Activated naive CD8-positive, alpha-beta T cell treated with anti-CD3 and anti-CD28 coated beads, Interleukin-2, amount 10 ng/mL, durations not matched to agents 7 days and 5 days (primary cell): ENCODE measurements at regions of chr4 and their contacts with region 1.

Region 1: DNA sequence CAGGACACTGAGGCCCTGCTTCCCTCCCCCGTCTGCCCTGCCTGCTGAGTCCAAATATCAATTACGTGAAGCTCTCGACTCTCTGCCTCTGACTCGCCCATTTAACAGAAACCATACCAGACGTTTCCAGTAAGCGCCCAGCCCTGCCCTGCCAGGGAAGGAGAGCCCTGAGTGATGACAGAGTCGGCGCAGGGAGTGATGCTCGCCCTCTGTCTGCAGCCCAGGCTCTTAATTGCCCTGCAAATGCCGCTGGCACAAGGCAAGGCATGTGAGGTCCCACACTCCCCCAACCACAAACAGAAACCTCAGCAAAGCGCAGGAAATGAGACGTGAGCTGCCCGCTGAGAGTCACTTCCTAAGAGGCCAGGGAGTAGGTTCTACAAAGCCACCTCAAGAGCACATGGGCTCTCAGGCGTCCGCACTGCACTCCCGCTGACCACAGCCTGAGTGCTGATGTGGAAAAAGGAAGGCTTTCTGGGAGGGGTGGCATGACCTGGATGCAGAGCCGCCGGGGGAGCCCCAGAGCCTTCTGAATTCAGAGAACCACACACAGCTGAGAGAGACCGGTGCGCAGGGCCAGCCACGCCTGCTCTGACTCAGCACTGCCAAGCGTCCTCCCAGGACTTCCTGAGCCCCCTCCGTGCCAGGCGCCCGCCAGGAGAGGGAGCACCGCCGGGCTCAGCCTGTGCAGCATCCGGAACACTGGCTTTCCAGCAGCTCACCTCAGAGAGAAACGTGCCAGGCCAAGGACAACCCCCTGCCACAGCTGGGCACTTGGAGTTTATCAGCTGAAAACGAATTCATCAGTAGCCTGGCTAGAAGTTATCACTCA is 5.3 kb downstream of the ZFYVE28 start:
- DNase-seq: peak; percentile 86
- ATAC-seq: peak; percentile 85
- H3K4me3 Mint-ChIP-seq: peak overlapping the region; percentile 58
- H3K27ac Mint-ChIP-seq: peak overlapping the region; percentile 90
- H3K4me1 Mint-ChIP-seq: peaks cover 34% of the 10 kb centered on the region
- H3K27me3 Mint-ChIP-seq: peaks cover 42% of the 10 kb centered on the region

Region 2: GRCh38 chr4:2241410-2242353 is 171.4 kb before region 1 on chr4 and contains the starts of genes HAUS3 and POLN:
- POLR2A ChIA-PET with region 1: interaction called, 13 read pairs
- DNase-seq: peak; percentile 99
- ATAC-seq: peak; percentile 93
- H3K4me3 Mint-ChIP-seq: peak within 1 kb of the TSS; percentile 92
- H3K27ac Mint-ChIP-seq: peak within 1 kb of the TSS; percentile 89
- H3K4me1 Mint-ChIP-seq: peaks cover 50% of the 10 kb centered on the region
- H3K27me3 Mint-ChIP-seq: peaks cover 4% of the 10 kb centered on the region
- total RNA-seq, gene HAUS3: 28.5 to 28.7 TPM
- total RNA-seq, gene POLN: 2.4 to 3.2 TPM

Region 3: GRCh38 chr4:2290974-2291704 is 122.0 kb before region 1 on chr4:
- POLR2A ChIA-PET with region 1: interaction called, 13 read pairs
- DNase-seq: peak; percentile 74
- ATAC-seq: peak; percentile 95
- H3K4me3 Mint-ChIP-seq: peak overlapping the region; percentile 77
- H3K27ac Mint-ChIP-seq: peak overlapping the region; percentile 84
- H3K4me1 Mint-ChIP-seq: peaks cover 25% of the 10 kb centered on the region
- H3K27me3 Mint-ChIP-seq: no peaks in the 10 kb centered on the region

Region 4: DNA sequence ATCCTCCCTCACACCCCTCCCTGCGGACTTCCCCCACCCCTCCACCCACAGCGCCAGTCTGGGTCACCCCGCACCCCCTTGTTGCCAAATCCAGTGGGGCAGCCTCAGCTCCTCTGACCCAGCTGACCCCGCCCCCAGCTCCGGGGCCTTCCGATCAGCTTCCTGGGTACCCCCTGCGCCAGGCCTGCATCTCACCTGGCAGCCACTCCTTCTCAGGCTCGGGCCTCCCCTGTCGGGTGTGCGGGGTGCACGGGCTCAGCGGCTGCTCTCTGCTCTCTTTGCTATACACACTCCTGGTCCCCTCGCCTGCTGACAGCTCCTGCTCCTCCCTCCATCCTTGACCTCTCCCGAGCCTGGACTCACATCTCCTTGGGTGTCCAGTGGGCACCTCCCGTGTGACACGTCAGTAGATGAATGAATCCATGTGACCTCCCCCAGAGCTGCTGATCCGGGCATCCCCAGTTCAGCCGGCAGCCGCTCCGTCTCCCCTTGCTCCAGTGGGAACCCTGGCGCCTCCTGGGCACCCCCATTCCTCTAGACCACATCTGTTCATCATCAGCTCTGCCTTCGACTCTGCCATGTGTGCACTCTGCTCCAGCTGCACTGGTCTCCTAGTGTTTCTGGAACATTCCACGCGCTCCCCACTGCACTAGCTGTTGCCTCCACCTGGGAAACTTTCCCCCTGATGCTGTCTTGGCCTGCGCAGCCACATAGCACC is 15.6 kb after region 1 on chr4:
- POLR2A ChIA-PET with region 1: no interaction called
- DNase-seq: no peak
- ATAC-seq: no peak
- H3K4me3 Mint-ChIP-seq: no peak overlapping the region
- H3K27ac Mint-ChIP-seq: no peak overlapping the region
- H3K4me1 Mint-ChIP-seq: no peaks in the 10 kb centered on the region
- H3K27me3 Mint-ChIP-seq: peaks cover 5% of the 10 kb centered on the region